Activated B cell treated with CpG ODN at 0.5 μM for 24 hours (primary cell): ENCODE measurements at regions of chr7 and their contacts with region 1.

Region 1: DNA sequence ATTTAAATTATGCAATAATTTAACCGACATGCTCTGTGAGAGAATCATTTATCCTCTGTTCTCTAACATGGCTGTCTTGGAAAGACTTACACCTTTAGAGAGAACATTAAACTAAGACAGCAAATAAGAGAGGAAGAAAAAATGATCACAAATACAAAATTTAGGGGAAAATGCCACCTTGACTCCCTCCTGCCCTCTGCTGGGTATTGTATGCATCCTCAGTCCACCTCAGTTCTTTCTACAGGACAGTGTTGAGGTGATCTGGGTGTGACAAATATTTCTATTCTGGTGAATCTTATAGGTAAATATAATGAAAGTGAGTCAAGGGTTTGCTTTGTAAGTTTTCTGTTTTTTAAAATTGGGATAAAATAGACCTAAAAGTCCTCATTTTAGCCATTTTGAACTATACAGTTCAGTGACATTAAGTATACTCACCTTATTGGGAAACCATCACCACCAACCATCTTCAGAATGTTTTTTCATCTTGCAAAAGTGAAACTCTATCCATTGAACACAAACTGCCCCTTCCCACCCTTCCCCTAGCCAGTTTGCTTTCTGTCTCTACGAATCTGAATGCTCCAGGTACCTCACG is 61.5 kb upstream of the ELMO1 start:
- DNase-seq: no peak
- ATAC-seq: peak; percentile 60
- H3K4me3 Mint-ChIP-seq: no peak overlapping the region
- H3K27ac Mint-ChIP-seq: no peak overlapping the region
- H3K4me1 Mint-ChIP-seq: no peaks in the 10 kb centered on the region
- H3K27me3 Mint-ChIP-seq: peaks cover 14% of the 10 kb centered on the region
- CTCF ChIP-seq: no peak

Region 2: GRCh38 chr7:36984710-36985313 is 525.3 kb before region 1 on chr7:
- CTCF ChIA-PET with region 1: no interaction called
- POLR2A ChIA-PET with region 1: no interaction called
- intact Hi-C with region 1: no loop called
- DNase-seq: no peak
- ATAC-seq: no peak
- H3K4me3 Mint-ChIP-seq: no peak overlapping the region
- H3K27ac Mint-ChIP-seq: no peak overlapping the region
- H3K4me1 Mint-ChIP-seq: peaks cover 33% of the 10 kb centered on the region
- H3K27me3 Mint-ChIP-seq: no peaks in the 10 kb centered on the region
- CTCF ChIP-seq: no peak

Region 3: GRCh38 chr7:37208528-37208927 is 301.6 kb before region 1 on chr7:
- CTCF ChIA-PET with region 1: interaction called, 7 read pairs
- POLR2A ChIA-PET with region 1: interaction called, 3 read pairs
- intact Hi-C with region 1: loop called (anchors 1 kb)
- DNase-seq: no peak
- ATAC-seq: peak; percentile 75
- H3K4me3 Mint-ChIP-seq: no peak overlapping the region
- H3K27ac Mint-ChIP-seq: peak overlapping the region; percentile 10
- H3K4me1 Mint-ChIP-seq: peaks cover 11% of the 10 kb centered on the region
- H3K27me3 Mint-ChIP-seq: no peaks in the 10 kb centered on the region
- CTCF ChIP-seq: no peak

Region 4: DNA sequence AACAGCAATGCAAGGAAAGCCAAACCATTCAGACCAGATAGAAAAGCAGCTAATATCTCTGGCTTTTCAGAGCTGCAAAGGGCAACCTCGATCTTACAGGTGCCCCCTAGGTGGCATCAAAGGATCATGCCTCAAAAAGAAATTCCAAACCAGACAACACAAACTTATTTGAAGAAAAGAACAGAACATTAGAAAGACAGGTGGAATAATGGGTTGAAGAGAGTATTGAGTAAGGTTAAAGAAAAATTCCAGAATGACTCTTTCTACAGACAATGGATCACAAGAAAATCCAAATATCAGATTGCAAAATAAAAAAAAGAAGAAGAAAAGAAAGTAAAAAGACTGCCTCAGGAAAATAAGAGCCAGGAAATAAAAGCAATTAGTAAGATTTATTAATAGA is 275.2 kb before region 1 on chr7:
- CTCF ChIA-PET with region 1: interaction called, 23 read pairs
- POLR2A ChIA-PET with region 1: no interaction called
- intact Hi-C with region 1: loop called (anchors 1 kb)
- DNase-seq: no peak
- ATAC-seq: no peak
- H3K4me3 Mint-ChIP-seq: no peak overlapping the region
- H3K27ac Mint-ChIP-seq: no peak overlapping the region
- H3K4me1 Mint-ChIP-seq: peaks cover 2% of the 10 kb centered on the region
- H3K27me3 Mint-ChIP-seq: no peaks in the 10 kb centered on the region
- CTCF ChIP-seq: no peak

Region 5: DNA sequence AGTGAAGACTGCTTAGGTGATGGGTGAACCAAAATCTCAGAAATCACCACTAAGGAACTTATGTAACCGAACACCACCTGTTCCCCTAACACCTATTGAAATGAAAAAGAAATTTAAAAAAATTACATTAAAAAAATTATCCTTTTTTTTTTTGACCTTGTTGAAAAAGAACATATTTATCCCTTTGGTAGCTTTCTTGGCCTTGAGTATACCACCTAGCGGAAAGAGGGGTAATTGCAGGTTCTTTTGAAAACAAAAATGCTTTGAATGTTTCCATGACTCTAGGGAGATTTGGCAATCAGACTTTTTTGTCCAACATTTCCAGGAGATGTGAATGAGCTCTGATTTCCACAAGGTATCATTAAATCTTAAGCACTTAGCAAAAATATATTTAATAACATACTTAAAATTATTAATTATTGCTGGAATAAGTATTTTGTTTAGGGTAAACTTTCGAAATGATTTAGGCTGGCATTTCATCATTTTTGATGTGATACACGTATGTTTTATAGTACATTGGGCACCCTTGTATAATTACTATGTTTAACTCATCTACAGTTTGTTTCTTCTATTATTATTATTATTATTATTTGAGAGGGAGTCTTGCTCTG is 14.5 kb before region 1 on chr7:
- CTCF ChIA-PET with region 1: interaction called, 35 read pairs
- POLR2A ChIA-PET with region 1: no interaction called
- intact Hi-C with region 1: no loop called
- DNase-seq: no peak
- ATAC-seq: peak; percentile 58
- H3K4me3 Mint-ChIP-seq: no peak overlapping the region
- H3K27ac Mint-ChIP-seq: no peak overlapping the region
- H3K4me1 Mint-ChIP-seq: no peaks in the 10 kb centered on the region
- H3K27me3 Mint-ChIP-seq: no peaks in the 10 kb centered on the region
- CTCF ChIP-seq: peak; percentile 91

Region 6: GRCh38 chr7:37732253-37732652 is 222.1 kb after region 1 on chr7:
- CTCF ChIA-PET with region 1: no interaction called
- POLR2A ChIA-PET with region 1: no interaction called
- intact Hi-C with region 1: loop called (anchors 10 kb)
- DNase-seq: no peak
- ATAC-seq: peak; percentile 87
- H3K4me3 Mint-ChIP-seq: no peak overlapping the region
- H3K27ac Mint-ChIP-seq: no peak overlapping the region
- H3K4me1 Mint-ChIP-seq: peaks cover 2% of the 10 kb centered on the region
- H3K27me3 Mint-ChIP-seq: peaks cover 10% of the 10 kb centered on the region
- CTCF ChIP-seq: no peak